CD4-positive, alpha-beta memory T cell (primary cell): ENCODE measurements at regions of chr14 and their contacts with region 1.

Region 1: GRCh38 chr14:70714055-70714621 is 72.4 kb downstream of the TTC9 start:
- DNase-seq: peak in 4 of 5 donors; percentile 39 to 51 (median 50)
- H3K4me3 ChIP-seq: no peak overlapping the region
- H3K4me3 Mint-ChIP-seq: no peak overlapping the region
- H3K27ac ChIP-seq: no peak overlapping the region
- H3K27ac Mint-ChIP-seq: peak overlapping the region in 2 of 7 donors; percentile 2 to 60
- H3K4me1 ChIP-seq: peaks cover 5% of the 10 kb centered on the region
- H3K4me1 Mint-ChIP-seq: peaks cover 0 to 5% (median 4%) of the 10 kb centered on the region in 4 donors
- H3K27me3 ChIP-seq: no peaks in the 10 kb centered on the region
- H3K27me3 Mint-ChIP-seq: peaks cover 0 to 2% of the 10 kb centered on the region in 2 donors

Region 2: DNA sequence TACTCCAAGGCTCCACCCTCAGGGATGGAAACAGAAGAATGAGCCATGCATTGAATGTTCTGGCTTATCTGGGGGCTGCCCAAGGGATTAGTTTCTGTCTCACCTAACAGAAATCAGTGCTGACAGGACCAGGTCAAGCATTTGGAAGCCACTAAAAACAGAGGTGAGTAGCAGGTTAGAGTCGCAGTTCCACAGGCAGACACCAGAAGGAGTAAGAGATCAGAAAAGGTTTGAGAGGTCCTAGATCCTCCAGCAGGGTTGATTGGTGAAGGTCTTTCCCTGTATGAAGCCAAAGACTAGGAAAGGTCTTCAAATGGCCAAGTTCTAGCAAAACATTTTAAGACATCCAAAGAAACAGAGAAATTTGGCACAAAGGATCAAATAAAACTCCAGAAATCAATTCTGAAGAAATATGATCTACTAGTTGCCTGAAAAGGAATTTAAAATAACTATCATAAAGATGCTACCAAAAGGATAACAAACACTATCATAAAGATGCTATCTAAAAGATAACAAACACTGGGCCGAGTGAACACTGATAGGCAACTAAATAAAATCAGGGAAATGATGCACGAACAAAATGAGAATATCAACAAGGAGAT is 91.9 kb before region 1 on chr14:
- CTCF ChIA-PET with region 1: interaction called, 231 read pairs
- POLR2A ChIA-PET with region 1: no interaction called
- intact Hi-C with region 1: loop called (anchors 1 kb)
- DNase-seq: peak; percentile 47 to 63 (median 61)
- H3K4me3 ChIP-seq: no peak overlapping the region
- H3K4me3 Mint-ChIP-seq: no peak overlapping the region
- H3K27ac ChIP-seq: no peak overlapping the region
- H3K27ac Mint-ChIP-seq: no peak overlapping the region
- H3K4me1 ChIP-seq: no peaks in the 10 kb centered on the region
- H3K4me1 Mint-ChIP-seq: peaks cover 0 to 2% (median under 1%) of the 10 kb centered on the region in 4 donors
- H3K27me3 ChIP-seq: no peaks in the 10 kb centered on the region
- H3K27me3 Mint-ChIP-seq: no peaks in the 10 kb centered on the region

Region 3: DNA sequence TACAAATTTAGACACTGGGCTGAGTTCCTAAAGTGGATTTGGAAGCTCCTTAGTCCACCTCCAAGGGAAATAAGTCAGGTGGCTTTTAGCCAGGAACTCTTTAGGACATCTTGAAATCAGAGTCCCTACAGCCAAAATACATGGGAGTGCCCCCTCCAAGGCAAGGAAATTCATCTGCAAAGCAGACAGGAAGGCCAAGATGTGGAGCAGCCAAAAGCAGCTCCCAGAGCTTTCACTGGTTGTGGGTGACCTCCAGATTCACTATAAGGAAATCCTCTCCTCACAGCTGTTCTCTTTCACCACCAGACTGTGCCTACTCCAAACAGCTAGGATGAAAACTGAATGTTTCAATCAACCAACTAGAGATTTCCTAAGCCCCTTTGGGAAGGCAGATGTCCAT is 65.8 kb before region 1 on chr14:
- CTCF ChIA-PET with region 1: interaction called, 13 read pairs
- POLR2A ChIA-PET with region 1: no interaction called
- intact Hi-C with region 1: no loop called
- DNase-seq: no peak
- H3K4me3 ChIP-seq: no peak overlapping the region
- H3K4me3 Mint-ChIP-seq: peak overlapping the region in 4 of 8 donors; percentile 24 to 67 (median 52)
- H3K27ac ChIP-seq: no peak overlapping the region
- H3K27ac Mint-ChIP-seq: peak overlapping the region in 5 of 7 donors; percentile 2 to 62 (median 42)
- H3K4me1 ChIP-seq: peaks cover 88% of the 10 kb centered on the region
- H3K4me1 Mint-ChIP-seq: peaks cover 57 to 96% (median 83%) of the 10 kb centered on the region in 4 donors
- H3K27me3 ChIP-seq: no peaks in the 10 kb centered on the region
- H3K27me3 Mint-ChIP-seq: no peaks in the 10 kb centered on the region

Region 4: DNA sequence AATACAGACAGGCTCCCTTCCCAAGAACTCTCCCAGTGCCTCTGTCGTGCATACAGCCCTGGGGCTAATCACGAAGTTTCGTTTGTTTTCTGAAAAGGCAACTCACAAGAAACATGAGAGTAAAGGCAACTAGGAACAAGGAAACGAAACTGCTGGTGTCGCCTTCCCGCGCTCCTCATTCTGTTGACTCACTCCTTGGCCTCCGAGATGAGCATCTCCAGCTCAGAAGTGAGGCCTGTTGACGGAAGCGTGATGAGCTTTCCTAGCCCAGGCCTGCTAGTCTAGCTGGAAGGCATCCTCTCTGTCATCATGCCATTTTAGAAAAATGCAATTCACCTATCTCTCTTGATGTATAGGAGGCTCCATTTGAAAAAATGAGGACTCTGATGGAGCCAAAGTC is 21.9 kb before region 1 on chr14:
- CTCF ChIA-PET with region 1: interaction called, 10 read pairs
- POLR2A ChIA-PET with region 1: no interaction called
- intact Hi-C with region 1: no loop called
- DNase-seq: no peak
- H3K4me3 ChIP-seq: no peak overlapping the region
- H3K4me3 Mint-ChIP-seq: no peak overlapping the region
- H3K27ac ChIP-seq: no peak overlapping the region
- H3K27ac Mint-ChIP-seq: no peak overlapping the region
- H3K4me1 ChIP-seq: no peaks in the 10 kb centered on the region
- H3K4me1 Mint-ChIP-seq: no peaks in the 10 kb centered on the region
- H3K27me3 ChIP-seq: no peaks in the 10 kb centered on the region
- H3K27me3 Mint-ChIP-seq: no peaks in the 10 kb centered on the region

Region 5: DNA sequence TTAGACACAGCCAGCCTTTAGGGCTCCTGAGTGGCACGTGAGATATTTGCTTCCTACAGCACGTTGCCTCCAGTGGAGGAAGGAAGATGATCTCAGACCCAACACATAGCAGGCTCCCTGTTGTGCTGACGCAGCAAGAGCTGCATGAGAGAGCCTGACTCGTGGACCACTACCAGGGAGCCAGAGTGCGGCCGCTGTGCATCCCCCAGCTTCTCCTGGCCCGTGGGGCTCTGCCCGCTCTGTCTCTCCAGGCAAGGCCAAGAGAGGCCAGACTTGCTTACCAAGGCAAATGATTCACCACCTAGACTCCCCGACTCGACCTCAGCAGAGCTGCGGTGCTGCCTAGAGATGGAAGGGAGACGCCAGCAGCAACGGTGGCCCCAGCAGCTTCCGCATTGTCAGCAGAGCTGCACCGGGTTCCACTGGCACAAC is 57.7 kb after region 1 on chr14:
- CTCF ChIA-PET with region 1: no interaction called
- POLR2A ChIA-PET with region 1: no interaction called
- intact Hi-C with region 1: no loop called
- DNase-seq: no peak
- H3K4me3 ChIP-seq: no peak overlapping the region
- H3K4me3 Mint-ChIP-seq: no peak overlapping the region
- H3K27ac ChIP-seq: no peak overlapping the region
- H3K27ac Mint-ChIP-seq: peak overlapping the region in 1 of 7 donors; percentile 32
- H3K4me1 ChIP-seq: no peaks in the 10 kb centered on the region
- H3K4me1 Mint-ChIP-seq: no peaks in the 10 kb centered on the region
- H3K27me3 ChIP-seq: no peaks in the 10 kb centered on the region
- H3K27me3 Mint-ChIP-seq: no peaks in the 10 kb centered on the region

Region 6: DNA sequence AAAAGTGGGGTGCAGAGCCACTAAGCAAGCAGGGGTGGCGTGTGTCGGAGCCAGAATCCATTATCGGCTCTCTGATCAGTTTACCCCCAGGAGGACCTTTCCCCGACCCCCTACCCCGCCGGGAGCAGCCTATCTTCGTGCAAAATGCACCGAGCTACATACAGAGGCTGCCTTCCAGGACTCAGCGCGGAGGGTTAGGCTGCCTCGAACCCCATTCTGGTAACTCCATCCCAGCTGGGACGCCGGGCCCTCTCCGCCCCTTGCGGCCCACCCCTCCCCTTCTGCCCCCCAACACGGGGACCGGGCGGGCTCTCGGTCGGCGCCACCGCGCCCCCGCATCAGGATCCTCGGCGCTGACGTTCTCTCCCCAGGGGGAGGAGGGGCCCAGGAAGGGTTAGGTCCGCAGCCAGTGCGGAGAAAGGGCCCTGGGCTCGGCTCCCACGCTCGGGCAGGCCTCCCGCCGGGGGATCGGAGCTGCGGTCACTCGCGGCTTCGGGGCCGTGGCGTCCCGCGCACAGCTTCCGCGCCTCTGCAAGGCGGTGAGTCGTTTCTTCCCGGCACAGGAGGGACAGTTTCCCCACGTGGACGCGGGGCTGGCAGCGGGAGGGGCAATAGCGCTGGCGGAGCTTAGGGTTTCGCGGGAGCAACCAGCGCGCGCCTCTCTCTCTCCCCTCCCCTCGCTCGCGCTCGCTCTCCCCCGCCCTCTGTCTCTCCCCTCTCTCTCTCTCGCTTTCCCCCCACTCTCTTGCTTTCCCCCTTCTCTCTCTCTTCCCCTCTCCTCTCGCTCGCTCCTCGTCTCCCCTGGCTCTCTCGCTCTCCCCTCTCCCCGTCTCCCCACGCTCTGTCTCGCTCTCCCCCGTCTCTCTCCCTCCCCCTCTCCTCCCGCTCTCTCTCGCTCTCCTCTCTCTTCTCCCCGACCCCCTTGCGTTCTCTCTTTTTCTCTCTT is 107.7 kb after region 1 on chr14:
- CTCF ChIA-PET with region 1: interaction called, 17 read pairs
- POLR2A ChIA-PET with region 1: no interaction called
- intact Hi-C with region 1: loop called (anchors 1 kb)
- DNase-seq: peak; percentile 37 to 79 (median 49)
- H3K4me3 ChIP-seq: peak overlapping the region; percentile 52 to 73
- H3K4me3 Mint-ChIP-seq: peak overlapping the region; percentile 83 to 93 (median 86)
- H3K27ac ChIP-seq: peak overlapping the region; percentile 14
- H3K27ac Mint-ChIP-seq: peak overlapping the region in 5 of 7 donors; percentile 62 to 77 (median 68)
- H3K4me1 ChIP-seq: peaks cover 18% of the 10 kb centered on the region
- H3K4me1 Mint-ChIP-seq: peaks cover 10 to 23% (median 14%) of the 10 kb centered on the region in 4 donors
- H3K27me3 ChIP-seq: no peaks in the 10 kb centered on the region
- H3K27me3 Mint-ChIP-seq: no peaks in the 10 kb centered on the region

Region 7: DNA sequence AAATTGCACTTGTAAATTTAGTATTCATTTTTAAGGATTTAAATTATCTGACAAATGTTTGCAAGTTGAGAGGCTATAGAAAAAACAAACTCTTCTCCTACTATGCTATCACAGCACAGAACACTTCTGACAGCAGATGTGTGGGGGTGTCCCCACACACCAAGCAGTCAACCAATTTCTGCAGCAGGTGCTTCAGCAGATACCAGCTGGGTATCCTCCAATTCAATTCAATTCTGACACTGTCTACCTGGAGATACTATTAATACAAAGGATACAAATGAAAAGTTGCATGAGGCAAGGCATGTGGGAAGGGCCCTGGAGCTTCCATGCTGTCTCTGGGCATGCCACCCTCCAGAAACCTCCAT is 228.2 kb after region 1 on chr14:
- CTCF ChIA-PET with region 1: no interaction called
- POLR2A ChIA-PET with region 1: no interaction called
- intact Hi-C with region 1: no loop called
- DNase-seq: no peak
- H3K4me3 ChIP-seq: no peak overlapping the region
- H3K4me3 Mint-ChIP-seq: peak overlapping the region in 7 of 8 donors; percentile 1 to 93 (median 65)
- H3K27ac ChIP-seq: no peak overlapping the region
- H3K27ac Mint-ChIP-seq: peak overlapping the region; percentile 80 to 98 (median 89)
- H3K4me1 ChIP-seq: peaks cover 42% of the 10 kb centered on the region
- H3K4me1 Mint-ChIP-seq: peaks cover 55 to 94% (median 73%) of the 10 kb centered on the region in 4 donors
- H3K27me3 ChIP-seq: no peaks in the 10 kb centered on the region
- H3K27me3 Mint-ChIP-seq: no peaks in the 10 kb centered on the region